ENCODE measurements at regions of chr2 and their contacts with region 1.

Region 1: DNA sequence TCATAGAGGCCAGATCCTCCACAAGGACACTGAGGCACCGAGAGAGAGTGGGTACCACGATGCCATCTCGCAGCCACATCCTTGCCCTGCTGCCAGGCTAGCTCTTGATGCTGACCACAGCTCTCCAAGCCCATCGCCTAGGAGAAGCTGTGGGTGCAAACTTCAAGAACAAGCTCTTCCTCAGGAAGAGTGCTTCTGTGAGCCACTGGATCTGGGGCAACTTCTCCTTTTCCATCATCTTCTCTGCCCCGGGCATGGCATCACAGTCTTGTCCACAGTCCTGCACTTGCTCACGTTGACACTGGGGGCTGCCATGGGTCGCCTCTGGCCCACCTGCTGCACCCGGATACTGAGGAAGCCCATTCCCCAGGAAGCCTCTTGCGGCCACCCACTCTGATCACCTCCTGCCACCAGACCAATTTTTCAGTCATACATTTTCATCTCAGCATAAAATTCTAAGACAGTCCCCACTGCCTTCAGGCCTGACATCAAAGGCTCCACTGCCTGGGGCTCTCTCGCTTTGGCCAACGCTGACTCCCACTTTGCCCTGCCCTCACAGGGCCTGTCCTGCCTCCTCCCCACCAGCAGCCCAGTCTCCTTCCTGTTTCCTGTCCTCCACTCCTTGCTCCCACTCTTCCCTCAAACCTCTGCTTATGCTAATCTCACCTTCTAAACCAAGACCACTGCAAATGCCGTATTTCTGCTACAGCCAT is 243.9 kb downstream of the AFF3 start:
- DNase-seq: no peak
- ATAC-seq: no peak
- H3K4me3 ChIP-seq: no peak overlapping the region
- H3K27ac ChIP-seq: no peak overlapping the region
- H3K4me1 ChIP-seq: no peaks in the 10 kb centered on the region
- H3K27me3 ChIP-seq: no peaks in the 10 kb centered on the region; a peak in 1 of 4 replicates
- CTCF ChIP-seq: no peak
- EP300 ChIP-seq: no peak
- POLR2A ChIP-seq: no peak
- RAD21 ChIP-seq: no peak

Region 2: GRCh38 chr2:99933913-99934650 is 35.6 kb after region 1 on chr2:
- CTCF ChIA-PET with region 1: no interaction called
- POLR2A ChIA-PET with region 1: no interaction called
- RAD21 ChIA-PET with region 1: no interaction called
- SMC1A ChIA-PET with region 1: no interaction called
- in situ Hi-C with region 1: no loop called
- intact Hi-C with region 1: no loop called
- DNase-seq: no peak
- ATAC-seq: no peak
- H3K4me3 ChIP-seq: no peak overlapping the region
- H3K27ac ChIP-seq: no peak overlapping the region
- H3K4me1 ChIP-seq: no peaks in the 10 kb centered on the region
- H3K27me3 ChIP-seq: peaks cover 0 to 3% of the 10 kb centered on the region in 2 experiments; a peak in 1 of 4 replicates
- CTCF ChIP-seq: 0 out of 6 replicates have a peak, but pooled peaks of 1 of the 3 experiments have one; percentile 14
- EP300 ChIP-seq: no peak
- POLR2A ChIP-seq: no peak
- RAD21 ChIP-seq: peak; percentile 34; the same call in 1 of the 2 replicates

Region 3: GRCh38 chr2:99949530-99949929 is 51.0 kb after region 1 on chr2:
- CTCF ChIA-PET with region 1: no interaction called
- POLR2A ChIA-PET with region 1: no interaction called
- RAD21 ChIA-PET with region 1: no interaction called
- SMC1A ChIA-PET with region 1: no interaction called
- in situ Hi-C with region 1: loop called (anchors 5 kb)
- intact Hi-C with region 1: no loop called
- DNase-seq: no peak
- ATAC-seq: no peak
- H3K4me3 ChIP-seq: no peak overlapping the region
- H3K27ac ChIP-seq: no peak overlapping the region
- H3K4me1 ChIP-seq: no peaks in the 10 kb centered on the region
- H3K27me3 ChIP-seq: no peaks in the 10 kb centered on the region
- CTCF ChIP-seq: no peak
- EP300 ChIP-seq: no peak
- POLR2A ChIP-seq: no peak
- RAD21 ChIP-seq: no peak